A549 (cell line): ENCODE measurements at regions of chr6 and their contacts with region 1.

Region 1: GRCh38 chr6:110039364-110039980 is 61.4 kb downstream of the GPR6 start:
- DNase-seq: peak; percentile 53 to 83
- ATAC-seq: peak; percentile 92 to 97
- H3K4me3 ChIP-seq: peak overlapping the region; percentile 17; the same call in 1 of the 3 replicates
- H3K27ac ChIP-seq: no peak overlapping the region
- H3K4me1 ChIP-seq: no peaks in the 10 kb centered on the region
- CTCF ChIP-seq: peak; percentile 82
- EP300 ChIP-seq: no peak
- POLR2A ChIP-seq: no peak
- RAD21 ChIP-seq: peak; percentile 80 to 88

Region 2: GRCh38 chr6:109526905-109527628 is 512.4 kb before region 1 on chr6:
- CTCF ChIA-PET with region 1: interaction called, 27 read pairs
- POLR2A ChIA-PET with region 1: no interaction called
- DNase-seq: peak; percentile 33 to 63
- ATAC-seq: peak; percentile 95 to 97
- H3K4me3 ChIP-seq: no peak overlapping the region
- H3K27ac ChIP-seq: no peak overlapping the region
- H3K4me1 ChIP-seq: no peaks in the 10 kb centered on the region
- CTCF ChIP-seq: peak; percentile 59
- EP300 ChIP-seq: no peak
- POLR2A ChIP-seq: no peak
- RAD21 ChIP-seq: peak; percentile 71 to 72

Region 3: GRCh38 chr6:109705258-109705657 is 334.2 kb before region 1 on chr6:
- CTCF ChIA-PET with region 1: interaction called, 131 read pairs
- POLR2A ChIA-PET with region 1: interaction called, 3 read pairs
- DNase-seq: peak; percentile 16 to 78
- ATAC-seq: peak; percentile 89 to 95
- H3K4me3 ChIP-seq: no peak overlapping the region
- H3K27ac ChIP-seq: no peak overlapping the region
- H3K4me1 ChIP-seq: no peaks in the 10 kb centered on the region
- CTCF ChIP-seq: peak; percentile 99
- EP300 ChIP-seq: no peak
- POLR2A ChIP-seq: no peak
- RAD21 ChIP-seq: peak; percentile 88 to 93

Region 4: GRCh38 chr6:110029144-110029543 is 10.3 kb before region 1 on chr6:
- CTCF ChIA-PET with region 1: interaction called, 32 read pairs
- POLR2A ChIA-PET with region 1: no interaction called
- DNase-seq: no peak
- ATAC-seq: no peak
- H3K4me3 ChIP-seq: no peak overlapping the region
- H3K27ac ChIP-seq: no peak overlapping the region
- H3K4me1 ChIP-seq: no peaks in the 10 kb centered on the region
- CTCF ChIP-seq: no peak
- EP300 ChIP-seq: no peak
- POLR2A ChIP-seq: no peak
- RAD21 ChIP-seq: no peak

Region 5: GRCh38 chr6:110389689-110390382 is 350.4 kb after region 1 on chr6:
- CTCF ChIA-PET with region 1: interaction called, 28 read pairs
- POLR2A ChIA-PET with region 1: no interaction called
- DNase-seq: no peak
- ATAC-seq: no peak
- H3K4me3 ChIP-seq: no peak overlapping the region
- H3K27ac ChIP-seq: no peak overlapping the region
- H3K4me1 ChIP-seq: no peaks in the 10 kb centered on the region
- CTCF ChIP-seq: no peak
- EP300 ChIP-seq: no peak
- POLR2A ChIP-seq: no peak
- RAD21 ChIP-seq: no peak